GM12878 (cell line): ENCODE measurements at regions of chr4 and their contacts with region 1.

Region 1: GRCh38 chr4:10006231-10006600 is 15.1 kb downstream of the SLC2A9 start:
- DNase-seq: peak; percentile 82
- ATAC-seq: peak; percentile 67
- H3K4me3 ChIP-seq: no peak overlapping the region; the same call in 1 of the 2 replicates
- H3K27ac ChIP-seq: peak overlapping the region; percentile 71
- H3K4me1 ChIP-seq: peaks cover 65% of the 10 kb centered on the region
- H3K27me3 ChIP-seq: no peaks in the 10 kb centered on the region
- CTCF ChIP-seq: no peak
- EP300 ChIP-seq: no peak
- POLR2A ChIP-seq: no peak
- RAD21 ChIP-seq: no peak

Region 2: GRCh38 chr4:9762823-9763475 is 243.3 kb before region 1 on chr4:
- CTCF ChIA-PET with region 1: interaction called, 325 read pairs
- POLR2A ChIA-PET with region 1: interaction called, 3 read pairs
- RAD21 ChIA-PET with region 1: interaction called, 9 read pairs
- SMC1A ChIA-PET with region 1: interaction called, 12 read pairs
- in situ Hi-C with region 1: no loop called
- intact Hi-C with region 1: no loop called
- DNase-seq: peak; percentile 40
- ATAC-seq: peak; percentile 75
- H3K4me3 ChIP-seq: no peak overlapping the region
- H3K27ac ChIP-seq: no peak overlapping the region
- H3K4me1 ChIP-seq: no peaks in the 10 kb centered on the region
- H3K27me3 ChIP-seq: no peaks in the 10 kb centered on the region
- CTCF ChIP-seq: peak; percentile 69 to 88 (median 75)
- EP300 ChIP-seq: no peak
- POLR2A ChIP-seq: no peak
- RAD21 ChIP-seq: peak; percentile 99

Region 3: DNA sequence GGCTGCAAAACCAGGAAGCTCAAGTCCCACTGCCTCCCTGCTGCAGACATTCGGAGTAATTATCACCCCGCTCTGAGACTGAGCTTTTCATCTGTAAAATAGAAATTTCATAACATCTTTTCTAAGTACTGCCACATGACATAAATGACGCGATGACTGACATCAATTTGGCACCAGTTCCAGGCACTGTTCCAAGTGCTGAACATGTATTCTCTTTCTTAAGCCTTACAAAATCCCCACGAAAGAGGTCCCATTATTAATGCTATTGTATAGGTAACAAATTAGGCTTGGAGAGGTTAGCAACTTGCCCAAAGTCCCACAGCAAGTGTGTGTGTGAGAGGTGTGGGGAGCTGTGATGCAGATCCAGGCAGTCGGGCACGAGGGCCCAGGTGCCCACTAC is 41.3 kb before region 1 on chr4:
- CTCF ChIA-PET with region 1: interaction called, 17 read pairs
- POLR2A ChIA-PET with region 1: interaction called, 39 read pairs
- RAD21 ChIA-PET with region 1: interaction called, 69 read pairs
- SMC1A ChIA-PET with region 1: interaction called, 70 read pairs
- in situ Hi-C with region 1: no loop called
- intact Hi-C with region 1: loop called (anchors 2 kb)
- DNase-seq: no peak
- ATAC-seq: peak; percentile 61
- H3K4me3 ChIP-seq: no peak overlapping the region
- H3K27ac ChIP-seq: no peak overlapping the region
- H3K4me1 ChIP-seq: peaks cover 4% of the 10 kb centered on the region
- H3K27me3 ChIP-seq: no peaks in the 10 kb centered on the region
- CTCF ChIP-seq: no peak
- EP300 ChIP-seq: no peak
- POLR2A ChIP-seq: no peak
- RAD21 ChIP-seq: no peak

Region 4: DNA sequence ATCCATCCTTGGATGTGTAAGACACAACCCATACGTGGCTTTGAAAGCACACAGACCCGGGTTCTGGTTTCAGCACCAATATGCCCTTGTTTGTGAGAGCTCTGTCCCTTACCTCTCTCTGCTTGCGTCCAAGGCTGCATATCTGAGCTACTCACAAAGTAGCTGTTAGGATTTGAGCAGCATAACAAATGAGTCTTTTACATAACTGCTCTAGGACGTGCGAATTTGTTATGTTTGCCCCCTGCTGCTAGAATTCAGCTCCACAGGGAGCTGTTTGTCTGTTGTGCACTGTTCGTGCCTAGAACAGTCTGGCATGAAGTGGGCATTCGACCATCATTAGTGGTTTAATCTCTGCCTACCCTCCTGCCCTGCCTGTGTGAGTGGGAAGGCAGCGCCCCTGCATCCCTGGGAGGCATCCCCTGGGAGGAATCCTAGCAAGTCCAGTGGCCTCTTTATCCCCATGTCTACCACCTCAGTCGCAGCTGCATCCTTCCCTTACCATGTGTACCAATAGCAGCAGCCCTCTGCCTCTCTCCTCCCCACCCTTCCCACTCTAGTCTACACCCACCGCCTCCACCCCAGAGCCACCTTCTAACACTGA is 27.0 kb before region 1 on chr4:
- CTCF ChIA-PET with region 1: interaction called, 5 read pairs
- POLR2A ChIA-PET with region 1: interaction called, 39 read pairs
- RAD21 ChIA-PET with region 1: interaction called, 12 read pairs
- SMC1A ChIA-PET with region 1: interaction called, 10 read pairs
- in situ Hi-C with region 1: no loop called
- intact Hi-C with region 1: no loop called
- DNase-seq: no peak
- ATAC-seq: peak; percentile 44
- H3K4me3 ChIP-seq: no peak overlapping the region
- H3K27ac ChIP-seq: no peak overlapping the region
- H3K4me1 ChIP-seq: no peaks in the 10 kb centered on the region; the same call in 1 of the 2 replicates
- H3K27me3 ChIP-seq: no peaks in the 10 kb centered on the region
- CTCF ChIP-seq: no peak
- EP300 ChIP-seq: no peak
- POLR2A ChIP-seq: no peak
- RAD21 ChIP-seq: no peak

Region 5: DNA sequence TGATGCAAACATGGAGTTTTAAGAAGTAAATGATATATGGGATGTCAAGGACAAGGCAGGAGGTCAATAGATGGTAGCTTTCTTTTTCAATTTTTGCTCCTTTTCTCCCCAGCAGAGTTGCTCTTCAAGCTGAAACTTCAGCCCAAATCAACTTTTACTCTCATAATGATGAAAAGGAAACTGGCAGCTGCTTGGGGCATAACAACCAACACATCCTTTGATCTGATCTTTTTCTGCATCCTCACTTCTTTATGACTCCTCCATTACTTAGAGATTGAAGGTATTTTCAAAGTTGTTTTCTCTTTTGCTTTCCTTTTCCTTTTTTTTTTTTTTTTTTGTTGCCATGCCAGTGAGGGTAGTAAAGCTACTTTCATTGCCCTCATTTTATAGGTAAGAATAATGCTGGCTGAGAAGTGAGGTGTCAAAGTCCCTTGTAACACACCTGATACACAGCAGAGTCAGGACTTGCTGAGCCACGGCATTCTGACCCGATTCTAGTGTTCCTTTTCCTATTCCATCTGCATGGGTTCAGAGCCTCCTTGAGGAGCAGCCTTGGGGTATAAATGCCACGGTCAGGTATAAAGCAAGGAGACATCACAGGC is 11.9 kb before region 1 on chr4:
- CTCF ChIA-PET with region 1: interaction called, 6 read pairs
- POLR2A ChIA-PET with region 1: interaction called, 15 read pairs
- RAD21 ChIA-PET with region 1: interaction called, 41 read pairs
- SMC1A ChIA-PET with region 1: interaction called, 43 read pairs
- in situ Hi-C with region 1: no loop called
- intact Hi-C with region 1: no loop called
- DNase-seq: no peak
- ATAC-seq: peak; percentile 79
- H3K4me3 ChIP-seq: no peak overlapping the region
- H3K27ac ChIP-seq: 0 out of 2 replicates have a peak overlapping the region, but pooled peaks have one; percentile 30
- H3K4me1 ChIP-seq: peaks cover 23% of the 10 kb centered on the region
- H3K27me3 ChIP-seq: no peaks in the 10 kb centered on the region
- CTCF ChIP-seq: no peak
- EP300 ChIP-seq: no peak
- POLR2A ChIP-seq: no peak
- RAD21 ChIP-seq: no peak